PC-9 (cell line): ENCODE measurements at regions of chr6 and their contacts with region 1.

Region 1: DNA sequence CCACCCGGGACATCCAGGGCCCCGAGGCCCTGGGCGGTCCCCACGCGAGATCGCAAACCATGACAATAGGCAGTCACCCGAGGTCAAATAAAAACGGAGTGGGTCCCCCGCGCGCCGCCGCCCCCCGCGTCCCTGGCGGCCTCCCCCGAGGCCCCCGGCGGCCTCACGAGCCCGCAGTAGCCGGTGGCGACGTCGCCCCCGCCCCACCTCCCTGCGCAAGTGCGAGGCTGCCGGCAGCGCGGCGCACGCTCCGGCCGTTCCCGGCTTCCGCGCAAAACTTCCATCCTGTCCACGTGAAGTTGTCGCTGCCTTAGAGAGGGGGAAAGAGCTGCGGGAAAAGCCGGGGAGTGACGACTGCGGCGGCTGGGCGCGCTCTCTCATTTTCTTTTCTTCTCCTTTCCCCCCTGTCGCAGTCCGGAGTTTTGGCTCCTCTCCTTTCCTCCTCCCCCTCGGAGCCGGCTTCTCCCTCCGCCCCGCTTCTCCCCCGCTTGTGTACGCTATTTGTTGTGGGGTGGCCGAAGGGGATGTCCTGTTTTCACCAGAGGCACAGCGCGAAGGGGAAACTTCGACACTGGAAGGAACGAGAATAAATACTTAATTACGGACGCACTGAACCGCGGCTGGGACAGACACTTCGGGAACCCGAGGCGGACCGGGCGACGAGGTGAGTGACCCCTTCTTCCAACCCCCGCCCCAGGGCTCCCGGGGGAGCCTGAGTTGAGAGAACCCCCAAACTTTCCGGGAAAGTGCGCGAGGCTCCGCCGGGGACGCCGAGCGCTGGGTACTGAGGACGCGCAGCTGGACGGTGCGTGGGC is at the start of gene EYA4:
- DNase-seq: peak in 1 of 2 experiments; percentile 57
- H3K4me3 ChIP-seq: peak within 1 kb of the TSS; percentile 69
- H3K27ac ChIP-seq: peak within 1 kb of the TSS; percentile 21
- H3K4me1 ChIP-seq: peaks cover 19% of the 10 kb centered on the region
- H3K27me3 ChIP-seq: peaks cover 26% of the 10 kb centered on the region; the same call in 1 of the 2 replicates
- CTCF ChIP-seq: no peak
- total RNA-seq, gene EYA4: 9.8 and 10.6 TPM in 2 replicates

Region 2: GRCh38 chr6:132673376-132674094 is 567.8 kb before region 1 on chr6:
- CTCF ChIA-PET with region 1: no interaction called
- POLR2A ChIA-PET with region 1: no interaction called
- intact Hi-C with region 1: no loop called
- DNase-seq: peak in 1 of 2 experiments; percentile 25
- H3K4me3 ChIP-seq: no peak overlapping the region
- H3K27ac ChIP-seq: no peak overlapping the region
- H3K4me1 ChIP-seq: peaks cover 7% of the 10 kb centered on the region; the same call in 1 of the 2 replicates
- H3K27me3 ChIP-seq: no peaks in the 10 kb centered on the region
- CTCF ChIP-seq: no peak

Region 3: DNA sequence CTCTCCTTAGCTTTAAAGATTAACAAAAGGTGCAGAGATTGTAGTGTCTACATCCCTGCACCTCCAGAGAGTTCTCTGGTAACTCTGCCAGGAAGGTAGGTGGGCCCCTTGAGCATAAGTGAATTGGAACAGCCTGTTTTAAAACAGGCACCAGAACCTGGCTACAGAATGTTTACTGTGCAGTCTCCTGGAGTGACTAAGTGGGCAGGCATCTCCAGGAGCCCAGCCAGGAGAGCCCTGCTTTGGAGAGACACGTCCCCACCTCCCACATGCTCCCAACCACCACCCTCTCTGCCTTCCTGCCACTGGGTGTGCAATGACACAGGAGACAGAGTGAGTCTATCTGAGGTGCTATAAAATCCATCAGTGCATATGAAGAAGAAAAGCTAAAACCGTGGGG is 110.4 kb before region 1 on chr6:
- CTCF ChIA-PET with region 1: no interaction called
- POLR2A ChIA-PET with region 1: no interaction called
- intact Hi-C with region 1: loop called (anchors 5 kb)
- DNase-seq: peak; percentile 87 to 88
- H3K4me3 ChIP-seq: no peak overlapping the region
- H3K27ac ChIP-seq: no peak overlapping the region
- H3K4me1 ChIP-seq: peaks cover 15% of the 10 kb centered on the region
- H3K27me3 ChIP-seq: no peaks in the 10 kb centered on the region
- CTCF ChIP-seq: no peak; the same call in 1 of the 2 replicates

Region 4: GRCh38 chr6:133262804-133263203 is 21.5 kb after region 1 on chr6:
- CTCF ChIA-PET with region 1: no interaction called
- POLR2A ChIA-PET with region 1: no interaction called
- intact Hi-C with region 1: no loop called
- DNase-seq: no peak
- H3K4me3 ChIP-seq: no peak overlapping the region
- H3K27ac ChIP-seq: no peak overlapping the region
- H3K4me1 ChIP-seq: peaks cover 13% of the 10 kb centered on the region
- H3K27me3 ChIP-seq: no peaks in the 10 kb centered on the region
- CTCF ChIP-seq: no peak

Region 5: DNA sequence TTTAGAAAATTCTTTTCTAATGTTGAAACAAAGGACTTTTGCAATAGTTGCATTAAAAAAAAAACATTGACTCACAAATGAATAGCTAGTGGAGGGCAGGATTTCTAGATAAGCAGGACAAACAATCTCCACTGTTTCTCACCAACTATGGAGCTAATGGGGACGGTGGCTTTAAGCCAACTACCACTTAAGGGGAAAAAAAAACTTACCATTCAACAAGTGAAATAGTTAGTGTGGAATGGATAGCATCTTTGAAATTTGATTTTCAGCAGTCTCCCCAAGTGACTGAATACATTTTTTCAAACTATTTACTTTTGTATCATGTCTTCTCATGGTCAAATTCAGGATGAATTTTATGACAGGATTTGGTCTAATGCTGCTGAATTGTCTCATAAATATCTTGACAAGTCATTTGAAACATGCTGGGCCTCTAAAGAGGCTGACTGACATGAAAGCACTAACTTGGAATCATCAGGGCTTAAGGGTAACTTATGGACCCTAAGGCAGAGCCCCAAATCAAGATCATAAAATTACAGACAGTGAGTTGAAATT is 100.4 kb after region 1 on chr6:
- CTCF ChIA-PET with region 1: no interaction called
- POLR2A ChIA-PET with region 1: no interaction called
- intact Hi-C with region 1: loop called (anchors 1 kb)
- DNase-seq: peak; percentile 37 to 79
- H3K4me3 ChIP-seq: no peak overlapping the region
- H3K27ac ChIP-seq: peak overlapping the region; percentile 56
- H3K4me1 ChIP-seq: peaks cover 22% of the 10 kb centered on the region
- H3K27me3 ChIP-seq: no peaks in the 10 kb centered on the region
- CTCF ChIP-seq: no peak

Region 6: GRCh38 chr6:133432021-133432989 is 191.0 kb after region 1 on chr6:
- CTCF ChIA-PET with region 1: no interaction called
- POLR2A ChIA-PET with region 1: no interaction called
- intact Hi-C with region 1: loop called (anchors 10 kb)
- DNase-seq: no peak
- H3K4me3 ChIP-seq: no peak overlapping the region
- H3K27ac ChIP-seq: no peak overlapping the region
- H3K4me1 ChIP-seq: no peaks in the 10 kb centered on the region
- H3K27me3 ChIP-seq: no peaks in the 10 kb centered on the region
- CTCF ChIP-seq: no peak

Region 7: DNA sequence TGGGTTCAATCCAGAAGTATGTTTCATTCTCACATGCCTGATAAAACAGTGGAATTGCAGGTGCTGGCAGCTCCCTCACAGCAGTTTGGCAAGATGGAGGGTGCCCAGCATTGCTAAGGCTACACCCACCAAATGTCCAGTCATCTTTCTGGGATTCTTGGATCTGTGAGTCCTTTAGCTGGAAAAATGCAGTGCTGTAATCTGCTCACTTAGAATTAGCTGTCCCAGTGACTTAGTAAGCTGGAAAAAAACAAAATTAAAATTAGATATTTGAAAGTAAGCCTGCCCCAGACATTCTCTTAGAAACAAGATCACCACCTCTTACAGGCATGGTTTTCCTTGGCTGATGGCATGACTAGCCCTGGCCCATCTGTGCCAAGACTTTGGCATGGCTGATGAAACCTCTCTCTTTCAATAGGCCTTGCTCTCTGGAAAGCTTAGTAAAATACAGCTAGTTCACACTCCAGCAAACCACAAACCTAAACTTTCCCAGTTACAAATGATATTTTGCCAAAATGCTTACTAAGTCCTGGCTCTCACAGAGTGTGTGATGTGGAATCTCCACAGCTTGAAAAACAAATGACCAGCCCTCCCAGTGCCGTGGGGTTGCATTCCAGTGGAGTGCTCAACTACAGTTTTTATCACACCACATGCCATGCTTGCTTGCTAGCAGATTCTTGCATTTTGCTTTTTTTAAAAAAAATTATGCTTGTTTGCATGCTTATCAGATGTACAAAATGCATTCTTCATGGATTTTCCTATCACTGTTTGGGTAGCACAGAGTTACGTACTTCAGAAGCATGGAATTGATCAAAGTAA is 261.4 kb after region 1 on chr6:
- CTCF ChIA-PET with region 1: no interaction called
- POLR2A ChIA-PET with region 1: no interaction called
- intact Hi-C with region 1: loop called (anchors 5 kb)
- DNase-seq: peak in 1 of 2 experiments; percentile 8
- H3K4me3 ChIP-seq: no peak overlapping the region
- H3K27ac ChIP-seq: no peak overlapping the region
- H3K4me1 ChIP-seq: peaks cover 9% of the 10 kb centered on the region
- H3K27me3 ChIP-seq: no peaks in the 10 kb centered on the region
- CTCF ChIP-seq: no peak

Region 8: GRCh38 chr6:133682506-133683307 is 441.4 kb after region 1 on chr6:
- CTCF ChIA-PET with region 1: no interaction called
- POLR2A ChIA-PET with region 1: no interaction called
- intact Hi-C with region 1: no loop called
- DNase-seq: no peak
- H3K4me3 ChIP-seq: no peak overlapping the region
- H3K27ac ChIP-seq: no peak overlapping the region
- H3K4me1 ChIP-seq: no peaks in the 10 kb centered on the region
- H3K27me3 ChIP-seq: no peaks in the 10 kb centered on the region
- CTCF ChIP-seq: no peak